ENCODE measurements at regions of chr9 and their contacts with region 1.

Region 1: GRCh38 chr9:101727612-101728524 is 10.6 kb downstream of the GRIN3A start:
- DNase-seq: peak; percentile 20 to 31 (median 24)
- ATAC-seq: peak; percentile 75
- H3K4me3 ChIP-seq: no peak overlapping the region
- H3K27ac ChIP-seq: no peak overlapping the region
- H3K4me1 ChIP-seq: no peaks in the 10 kb centered on the region
- H3K27me3 ChIP-seq: no peaks in the 10 kb centered on the region
- CTCF ChIP-seq: peak; percentile 49 to 73 (median 53)
- EP300 ChIP-seq: no peak
- POLR2A ChIP-seq: no peak
- RAD21 ChIP-seq: peak in 1 of 2 experiments; percentile 56; a peak in 3 of 4 replicates

Region 2: GRCh38 chr9:101601904-101602765 is 125.7 kb before region 1 on chr9:
- CTCF ChIA-PET with region 1: no interaction called
- POLR2A ChIA-PET with region 1: no interaction called
- in situ Hi-C with region 1: no loop called
- intact Hi-C with region 1: loop called (anchors 5 kb)
- DNase-seq: peak; percentile 24 to 60 (median 36)
- ATAC-seq: peak; percentile 88
- H3K4me3 ChIP-seq: no peak overlapping the region
- H3K27ac ChIP-seq: no peak overlapping the region
- H3K4me1 ChIP-seq: no peaks in the 10 kb centered on the region
- H3K27me3 ChIP-seq: no peaks in the 10 kb centered on the region
- CTCF ChIP-seq: peak; percentile 46 to 76 (median 64); a peak in 5 of 6 replicates
- EP300 ChIP-seq: no peak
- POLR2A ChIP-seq: no peak
- RAD21 ChIP-seq: peak; percentile 61 to 78